Activated CD4-positive, alpha-beta T cell treated with anti-CD3 and anti-CD28 coated beads, Interleukin-2, amount 10 ng/mL, durations not matched to agents 24 days and 14 days (primary cell): ENCODE measurements at regions of chr2 and their contacts with region 1.

Region 1: DNA sequence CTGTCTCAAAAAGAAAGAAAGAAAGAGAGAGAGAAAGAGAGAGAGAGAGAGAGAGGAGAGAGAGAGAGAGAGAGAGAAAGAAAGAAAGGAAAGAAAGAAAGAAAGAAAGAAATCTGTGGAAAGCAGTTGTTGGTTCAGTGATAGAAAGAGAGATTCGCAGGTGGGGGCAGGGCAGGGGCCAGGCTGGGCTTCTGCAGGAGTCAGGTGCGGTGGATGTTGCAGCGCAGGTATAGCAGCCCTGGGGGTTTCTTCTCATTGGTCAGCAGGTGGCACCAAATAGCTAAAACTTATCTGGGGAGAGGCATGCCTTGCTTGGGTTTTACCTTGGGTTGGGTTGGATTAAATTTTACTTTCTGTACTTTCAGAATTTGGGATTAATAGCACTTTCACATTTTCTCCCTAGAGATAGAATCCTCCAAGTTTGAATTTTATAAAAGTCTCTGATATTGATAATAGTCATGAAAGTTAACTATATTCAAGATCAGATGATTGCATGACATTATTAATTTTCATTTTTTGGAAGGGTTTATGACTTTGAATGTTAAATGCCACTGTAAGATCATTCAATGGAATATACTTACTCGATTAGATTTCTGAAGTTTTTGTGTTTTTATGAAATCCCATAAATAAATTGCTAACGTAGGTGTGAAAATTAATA is 66.6 kb downstream of the SPTBN1 start:
- DNase-seq: peak; percentile 90
- H3K4me3 Mint-ChIP-seq: no peak overlapping the region
- H3K27ac Mint-ChIP-seq: no peak overlapping the region
- H3K4me1 Mint-ChIP-seq: peaks cover 17% of the 10 kb centered on the region
- H3K27me3 Mint-ChIP-seq: peaks cover 21% of the 10 kb centered on the region

Region 2: GRCh38 chr2:54341656-54342055 is 181.1 kb before region 1 on chr2:
- intact Hi-C with region 1: no loop called
- DNase-seq: no peak
- H3K4me3 Mint-ChIP-seq: no peak overlapping the region
- H3K27ac Mint-ChIP-seq: no peak overlapping the region
- H3K4me1 Mint-ChIP-seq: no peaks in the 10 kb centered on the region
- H3K27me3 Mint-ChIP-seq: peaks cover 42% of the 10 kb centered on the region

Region 3: GRCh38 chr2:54558188-54559005 is 35.6 kb after region 1 on chr2:
- intact Hi-C with region 1: loop called (anchors 1 kb)
- DNase-seq: peak; percentile 91
- H3K4me3 Mint-ChIP-seq: peak overlapping the region; percentile 95
- H3K27ac Mint-ChIP-seq: peak overlapping the region; percentile 95
- H3K4me1 Mint-ChIP-seq: peaks cover 55% of the 10 kb centered on the region
- H3K27me3 Mint-ChIP-seq: no peaks in the 10 kb centered on the region

Region 4: GRCh38 chr2:54589340-54590215 is 66.8 kb after region 1 on chr2:
- intact Hi-C with region 1: no loop called
- DNase-seq: peak; percentile 83
- H3K4me3 Mint-ChIP-seq: peak overlapping the region; percentile 67
- H3K27ac Mint-ChIP-seq: peak overlapping the region; percentile 85
- H3K4me1 Mint-ChIP-seq: peaks cover 66% of the 10 kb centered on the region
- H3K27me3 Mint-ChIP-seq: no peaks in the 10 kb centered on the region

Region 5: GRCh38 chr2:54606393-54606969 is 83.7 kb after region 1 on chr2:
- intact Hi-C with region 1: loop called (anchors 2 kb)
- DNase-seq: peak; percentile 82
- H3K4me3 Mint-ChIP-seq: peak overlapping the region; percentile 69
- H3K27ac Mint-ChIP-seq: peak overlapping the region; percentile 84
- H3K4me1 Mint-ChIP-seq: peaks cover 77% of the 10 kb centered on the region
- H3K27me3 Mint-ChIP-seq: no peaks in the 10 kb centered on the region

Region 6: DNA sequence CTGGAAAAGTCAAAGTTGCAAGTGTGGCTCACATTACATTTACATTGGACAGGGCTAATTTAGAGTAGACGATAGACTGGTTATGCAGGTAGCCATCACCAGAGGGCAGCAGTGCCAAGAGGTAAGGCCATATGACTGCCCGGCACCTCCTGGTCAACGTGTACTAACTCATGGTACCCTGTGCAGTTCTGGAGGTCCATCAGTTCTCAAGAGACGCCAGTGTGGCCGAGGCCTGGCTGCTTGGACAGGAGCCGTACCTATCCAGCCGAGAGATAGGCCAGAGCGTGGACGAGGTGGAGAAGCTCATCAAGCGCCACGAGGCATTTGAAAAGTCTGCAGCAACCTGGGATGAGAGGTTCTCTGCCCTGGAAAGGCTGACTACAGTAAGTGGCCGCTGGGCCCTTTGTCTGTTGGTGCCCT is 134.9 kb after region 1 on chr2:
- intact Hi-C with region 1: loop called (anchors 1 kb)
- DNase-seq: peak; percentile 78
- H3K4me3 Mint-ChIP-seq: no peak overlapping the region
- H3K27ac Mint-ChIP-seq: peak overlapping the region; percentile 76
- H3K4me1 Mint-ChIP-seq: peaks cover 19% of the 10 kb centered on the region
- H3K27me3 Mint-ChIP-seq: no peaks in the 10 kb centered on the region

Region 7: DNA sequence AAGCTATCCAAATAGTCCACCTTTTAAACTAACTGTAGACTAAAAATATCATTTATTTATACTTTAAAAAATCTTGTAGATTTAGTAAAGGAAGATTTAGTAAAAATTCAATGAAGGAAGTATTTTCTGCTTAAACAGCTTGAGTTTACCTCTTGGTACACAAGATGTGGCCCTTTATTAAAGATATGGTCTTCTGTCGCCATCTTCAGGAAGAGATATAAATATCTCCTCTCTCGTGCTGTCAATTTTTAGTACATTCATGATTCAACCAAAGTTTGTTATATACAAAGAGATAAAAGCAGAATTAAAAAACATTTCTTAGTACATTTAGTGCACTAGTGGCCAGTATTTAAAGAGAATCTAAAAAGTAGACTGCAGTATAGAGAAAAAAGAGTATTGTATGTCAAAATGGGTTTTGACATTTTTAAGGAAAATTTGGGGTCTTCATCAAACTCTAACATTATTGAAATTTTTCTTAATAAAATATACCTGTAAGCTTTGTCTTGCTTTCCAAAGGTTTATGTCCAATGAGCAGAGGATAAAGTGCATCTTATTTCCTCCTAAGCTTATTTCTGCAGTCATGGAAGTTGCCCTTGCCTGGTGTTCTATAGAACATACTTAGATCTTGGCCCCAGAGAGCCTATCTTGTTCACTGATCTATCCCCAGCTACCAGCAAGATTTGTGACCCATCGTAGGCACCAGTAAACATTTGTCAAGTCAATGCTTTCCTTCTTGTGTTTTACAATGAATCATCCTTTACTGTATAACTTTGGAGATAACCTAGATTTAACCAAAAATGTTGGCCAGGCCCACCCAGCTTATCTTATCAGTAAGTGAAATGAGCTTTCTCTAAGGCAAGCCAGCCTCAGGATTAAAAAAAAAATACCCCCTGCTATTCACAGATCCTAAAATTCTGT is 182.2 kb after region 1 on chr2:
- intact Hi-C with region 1: loop called (anchors 1 kb)
- DNase-seq: peak; percentile 68
- H3K4me3 Mint-ChIP-seq: no peak overlapping the region
- H3K27ac Mint-ChIP-seq: no peak overlapping the region
- H3K4me1 Mint-ChIP-seq: no peaks in the 10 kb centered on the region
- H3K27me3 Mint-ChIP-seq: peaks cover 61% of the 10 kb centered on the region

Region 8: GRCh38 chr2:54859997-54860686 is 337.4 kb after region 1 on chr2:
- intact Hi-C with region 1: no loop called
- DNase-seq: no peak
- H3K4me3 Mint-ChIP-seq: no peak overlapping the region
- H3K27ac Mint-ChIP-seq: no peak overlapping the region
- H3K4me1 Mint-ChIP-seq: no peaks in the 10 kb centered on the region
- H3K27me3 Mint-ChIP-seq: no peaks in the 10 kb centered on the region

Region 9: GRCh38 chr2:55175254-55176025 is 652.7 kb after region 1 on chr2:
- intact Hi-C with region 1: loop called (anchors 10 kb)
- DNase-seq: peak; percentile 59
- H3K4me3 Mint-ChIP-seq: no peak overlapping the region
- H3K27ac Mint-ChIP-seq: no peak overlapping the region
- H3K4me1 Mint-ChIP-seq: no peaks in the 10 kb centered on the region
- H3K27me3 Mint-ChIP-seq: no peaks in the 10 kb centered on the region

Region 10: GRCh38 chr2:55707751-55708150 is 1185.0 kb after region 1 on chr2:
- intact Hi-C with region 1: no loop called
- DNase-seq: no peak
- H3K4me3 Mint-ChIP-seq: no peak overlapping the region
- H3K27ac Mint-ChIP-seq: no peak overlapping the region
- H3K4me1 Mint-ChIP-seq: no peaks in the 10 kb centered on the region
- H3K27me3 Mint-ChIP-seq: peaks cover 12% of the 10 kb centered on the region